Breast epithelium (tissue), 4 donors: ENCODE measurements at regions of chr14 and their contacts with region 1.

Region 1: DNA sequence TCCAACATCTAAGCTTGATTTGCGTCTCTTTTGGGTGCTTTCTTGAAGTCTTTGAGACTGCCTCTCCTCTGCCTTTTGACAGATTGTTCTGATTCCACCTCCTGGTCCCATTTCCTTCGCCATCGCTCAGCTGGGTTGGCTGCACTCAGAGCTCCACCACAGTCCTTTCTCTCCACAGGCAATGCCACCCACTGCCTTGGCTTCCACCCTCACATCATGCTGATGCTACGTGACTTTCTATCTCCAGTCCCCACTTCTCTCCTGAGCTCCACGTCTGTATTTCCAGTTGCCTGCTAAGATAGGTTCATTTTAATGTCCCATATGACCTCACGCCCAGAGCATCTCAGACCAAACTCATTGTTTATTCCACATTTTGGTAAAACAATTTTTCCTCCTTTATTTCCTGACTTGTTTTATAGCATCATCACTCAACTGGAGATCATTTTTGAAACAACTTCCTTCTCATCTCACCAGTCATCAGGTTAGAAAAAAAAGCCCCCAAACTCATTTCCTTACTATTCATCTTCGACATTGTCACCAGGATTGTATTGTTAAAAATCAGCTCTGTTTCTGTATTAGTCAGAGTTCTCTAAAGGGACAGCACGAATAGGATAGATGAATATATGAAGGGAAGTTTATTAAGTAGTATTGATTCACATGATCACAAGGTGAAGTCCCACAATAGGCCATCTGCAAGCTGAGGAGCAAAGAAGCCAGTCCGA is 392.4 kb downstream of the FUT8 start:
- DNase-seq: no peak
- H3K4me3 ChIP-seq: no peak overlapping the region
- H3K27ac ChIP-seq: no peak overlapping the region
- H3K4me1 ChIP-seq: no peaks in the 10 kb centered on the region
- H3K27me3 ChIP-seq: no peaks in the 10 kb centered on the region
- CTCF ChIP-seq: no peak
- POLR2A ChIP-seq: no peak

Region 2: GRCh38 chr14:65731933-65732510 is 72.9 kb before region 1 on chr14:
- intact Hi-C with region 1: loop called (anchors 2 kb)
- DNase-seq: no peak
- H3K4me3 ChIP-seq: no peak overlapping the region
- H3K27ac ChIP-seq: no peak overlapping the region
- H3K4me1 ChIP-seq: no peaks in the 10 kb centered on the region
- H3K27me3 ChIP-seq: no peaks in the 10 kb centered on the region
- CTCF ChIP-seq: no peak
- POLR2A ChIP-seq: no peak

Region 3: DNA sequence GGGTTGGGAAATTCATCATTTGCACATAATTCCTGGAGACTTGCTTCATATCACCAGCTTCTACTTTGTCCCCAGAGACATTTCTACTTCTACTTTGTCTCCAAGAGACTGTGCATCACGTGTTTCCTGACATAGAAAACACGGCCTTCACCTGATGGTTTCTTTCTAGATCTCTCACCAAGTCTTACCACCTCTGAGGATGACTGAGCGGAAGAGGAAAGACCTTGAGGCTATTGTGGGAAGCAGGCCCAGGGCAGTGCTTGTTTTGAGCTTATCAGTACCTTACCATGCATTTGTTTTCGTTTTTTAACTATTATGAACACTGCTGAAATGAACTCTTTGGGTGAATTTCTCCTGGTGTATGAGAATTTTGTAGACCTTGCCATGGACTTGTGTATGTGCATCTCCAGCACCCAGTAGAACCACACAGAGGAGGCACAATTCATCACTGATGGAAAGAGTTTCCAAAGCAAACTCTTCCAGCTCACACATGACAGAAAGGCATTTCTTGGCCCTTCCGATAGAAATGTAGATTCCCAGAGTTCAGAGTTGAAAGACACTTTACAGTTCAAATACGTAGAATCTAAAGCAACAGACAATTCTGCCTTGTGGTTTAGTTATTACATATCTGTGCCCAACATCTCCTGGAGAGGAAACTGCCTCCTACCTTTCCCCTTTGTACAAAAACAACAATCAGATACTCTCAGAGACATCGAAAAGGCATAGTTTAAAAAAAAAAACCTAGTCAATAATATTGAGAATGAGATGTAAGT is 42.3 kb after region 1 on chr14:
- intact Hi-C with region 1: loop called (anchors 2 kb)
- DNase-seq: no peak
- H3K4me3 ChIP-seq: no peak overlapping the region
- H3K27ac ChIP-seq: no peak overlapping the region
- H3K4me1 ChIP-seq: no peaks in the 10 kb centered on the region
- H3K27me3 ChIP-seq: no peaks in the 10 kb centered on the region
- CTCF ChIP-seq: no peak
- POLR2A ChIP-seq: no peak